K562 (cell line): ENCODE measurements at regions of chr1 and their contacts with region 1.

Region 1: DNA sequence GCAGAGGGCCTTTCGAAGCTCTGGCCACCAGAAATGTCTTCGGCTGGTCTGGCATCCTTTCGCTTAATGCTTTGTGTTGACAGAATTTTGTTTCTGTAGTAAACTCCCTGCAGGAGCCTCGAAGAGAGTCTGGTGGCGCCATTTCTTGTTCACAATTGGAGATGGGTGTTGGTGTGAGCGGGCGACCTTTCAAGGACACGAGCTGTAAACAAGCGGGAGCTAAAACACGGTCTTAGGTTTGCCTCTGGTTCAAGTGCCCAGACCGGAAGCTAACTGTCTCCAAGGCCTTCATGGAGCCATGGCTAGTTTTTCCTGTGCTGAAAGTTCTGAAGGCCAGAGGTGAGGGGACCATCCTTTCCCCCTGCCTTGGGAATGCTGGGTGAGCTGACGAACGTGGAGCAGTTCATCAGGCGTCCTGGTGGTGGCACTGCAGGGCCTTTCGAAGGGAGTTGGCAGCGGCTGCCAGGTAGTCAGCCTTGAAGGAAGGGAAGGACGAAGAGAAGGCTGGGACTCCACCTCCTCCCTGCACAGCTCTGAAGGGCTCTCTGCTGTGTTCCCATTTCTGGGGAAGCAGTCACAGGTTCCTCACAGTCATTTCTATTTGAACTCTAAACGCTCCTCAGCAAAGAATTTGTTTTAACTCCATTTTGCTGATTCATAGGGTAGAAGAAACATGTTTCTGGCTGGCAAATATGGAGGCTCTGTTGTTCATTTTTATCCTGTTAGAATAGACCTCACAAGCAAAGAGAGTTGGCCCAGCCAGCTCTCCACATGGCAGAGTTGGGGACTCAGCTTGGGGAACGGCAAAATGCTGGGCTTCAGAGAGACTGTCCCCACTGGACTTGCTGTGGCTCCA is 35.2 kb downstream of the URB2 start:
- DNase-seq: peak; percentile 74 to 84 (median 80)
- ATAC-seq: peak; percentile 98
- H3K4me3 ChIP-seq: no peak overlapping the region
- H3K27ac ChIP-seq: no peak overlapping the region
- H3K4me1 ChIP-seq: no peaks in the 10 kb centered on the region
- H3K27me3 ChIP-seq: no peaks in the 10 kb centered on the region
- CTCF ChIP-seq: peak; percentile 77 to 96 (median 91)
- EP300 ChIP-seq: no peak
- POLR2A ChIP-seq: no peak
- RAD21 ChIP-seq: peak; percentile 83 to 85

Region 2: DNA sequence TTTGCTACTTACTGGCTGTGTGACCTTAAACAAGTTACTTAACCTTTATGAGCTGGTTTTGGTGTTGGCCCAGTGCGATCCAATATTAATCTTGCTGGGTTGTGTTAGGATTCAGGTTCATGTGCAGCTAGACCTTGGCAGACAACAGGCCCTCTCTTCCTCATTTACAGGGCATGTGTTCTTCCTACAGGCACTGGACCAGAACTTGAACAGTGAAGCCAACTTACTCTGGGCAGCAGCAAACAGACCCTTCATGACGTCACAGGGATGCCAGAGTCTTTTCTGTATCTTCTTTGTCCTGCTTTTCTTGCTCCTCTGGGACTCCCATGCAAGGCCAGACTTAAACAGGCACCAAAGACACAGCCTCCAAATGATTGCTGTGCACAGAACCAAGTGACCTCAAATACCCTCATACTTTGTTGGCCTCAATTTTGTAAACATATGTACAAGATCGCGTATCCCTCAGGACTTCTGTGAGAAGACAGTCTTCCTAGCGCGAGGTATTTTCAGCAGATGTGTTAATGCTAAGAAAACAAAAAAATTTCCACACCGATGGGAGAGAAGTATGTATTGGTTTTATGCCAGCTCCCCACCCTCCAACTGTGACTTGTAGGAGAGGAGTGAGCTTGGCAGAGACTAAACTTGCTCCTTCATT is 38.5 kb after region 1 on chr1:
- CTCF ChIA-PET with region 1: no interaction called
- POLR2A ChIA-PET with region 1: no interaction called
- in situ Hi-C with region 1: loop called (anchors 5 kb)
- intact Hi-C with region 1: no loop called
- DNase-seq: no peak
- ATAC-seq: no peak
- H3K4me3 ChIP-seq: no peak overlapping the region
- H3K27ac ChIP-seq: no peak overlapping the region
- H3K4me1 ChIP-seq: no peaks in the 10 kb centered on the region
- H3K27me3 ChIP-seq: peaks cover 18 to 41% of the 10 kb centered on the region in 2 experiments
- CTCF ChIP-seq: no peak
- EP300 ChIP-seq: no peak
- POLR2A ChIP-seq: no peak
- RAD21 ChIP-seq: no peak

Region 3: GRCh38 chr1:230310381-230311163 is 649.3 kb after region 1 on chr1:
- CTCF ChIA-PET with region 1: interaction called, 11 read pairs
- POLR2A ChIA-PET with region 1: interaction called, 4 read pairs
- in situ Hi-C with region 1: no loop called
- intact Hi-C with region 1: loop called (anchors 2 kb)
- DNase-seq: peak; percentile 88 to 92 (median 90)
- ATAC-seq: peak; percentile 95
- H3K4me3 ChIP-seq: no peak overlapping the region
- H3K27ac ChIP-seq: no peak overlapping the region
- H3K4me1 ChIP-seq: no peaks in the 10 kb centered on the region
- H3K27me3 ChIP-seq: peaks cover 30 to 49% of the 10 kb centered on the region in 2 experiments
- CTCF ChIP-seq: peak; percentile 87 to 97 (median 95)
- EP300 ChIP-seq: no peak
- POLR2A ChIP-seq: no peak
- RAD21 ChIP-seq: peak; percentile 98